Activated CD8-positive, alpha-beta T cell treated with anti-CD3 and anti-CD28 coated beads, Interleukin-2, amount 10 ng/mL, durations not matched to agents 7 days and 5 days (primary cell): ENCODE measurements at regions of chr14 and their contacts with region 1.

Region 1: DNA sequence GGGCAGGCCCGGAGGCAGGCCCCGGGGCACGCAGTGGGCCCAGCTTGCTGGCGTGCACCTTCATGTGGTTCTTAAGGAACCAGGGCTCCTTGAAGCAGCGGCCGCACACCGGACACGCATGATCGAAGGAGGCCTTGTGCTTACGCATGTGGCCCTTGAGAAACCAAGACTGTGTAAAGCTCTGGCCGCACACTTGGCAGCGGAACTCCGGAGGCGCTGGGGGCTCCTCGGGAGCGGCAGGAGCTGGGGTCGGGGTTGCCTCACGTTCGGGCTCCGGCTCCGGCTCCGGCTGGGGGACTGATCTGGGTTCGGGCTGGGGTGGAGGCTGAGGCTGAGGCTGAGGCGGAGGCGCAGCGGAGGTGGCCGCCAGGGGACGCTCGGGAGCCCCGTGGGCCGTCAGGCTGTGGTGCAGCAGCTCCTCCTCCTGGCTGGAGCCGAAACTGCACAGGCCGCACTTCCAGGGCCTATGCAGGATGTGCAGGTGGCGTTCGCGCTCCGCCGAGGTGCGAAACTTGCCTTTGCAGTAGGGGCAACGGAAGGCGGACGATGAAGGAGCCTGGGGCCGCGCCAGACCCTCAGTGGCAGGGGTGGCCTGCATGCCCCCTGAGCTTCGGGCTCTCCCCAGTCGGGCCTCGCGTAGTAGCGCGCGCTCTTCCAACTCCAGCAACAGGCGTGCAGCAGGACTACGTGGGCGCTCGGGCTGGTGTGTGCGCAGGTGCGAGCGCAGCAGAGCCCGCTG is 6.0 kb downstream of the ZNF219 start:
- DNase-seq: peak; percentile 92
- ATAC-seq: peak; percentile 70
- H3K4me3 Mint-ChIP-seq: no peak overlapping the region
- H3K27ac Mint-ChIP-seq: no peak overlapping the region
- H3K4me1 Mint-ChIP-seq: peaks cover 25% of the 10 kb centered on the region
- H3K27me3 Mint-ChIP-seq: peaks cover 27% of the 10 kb centered on the region

Region 2: DNA sequence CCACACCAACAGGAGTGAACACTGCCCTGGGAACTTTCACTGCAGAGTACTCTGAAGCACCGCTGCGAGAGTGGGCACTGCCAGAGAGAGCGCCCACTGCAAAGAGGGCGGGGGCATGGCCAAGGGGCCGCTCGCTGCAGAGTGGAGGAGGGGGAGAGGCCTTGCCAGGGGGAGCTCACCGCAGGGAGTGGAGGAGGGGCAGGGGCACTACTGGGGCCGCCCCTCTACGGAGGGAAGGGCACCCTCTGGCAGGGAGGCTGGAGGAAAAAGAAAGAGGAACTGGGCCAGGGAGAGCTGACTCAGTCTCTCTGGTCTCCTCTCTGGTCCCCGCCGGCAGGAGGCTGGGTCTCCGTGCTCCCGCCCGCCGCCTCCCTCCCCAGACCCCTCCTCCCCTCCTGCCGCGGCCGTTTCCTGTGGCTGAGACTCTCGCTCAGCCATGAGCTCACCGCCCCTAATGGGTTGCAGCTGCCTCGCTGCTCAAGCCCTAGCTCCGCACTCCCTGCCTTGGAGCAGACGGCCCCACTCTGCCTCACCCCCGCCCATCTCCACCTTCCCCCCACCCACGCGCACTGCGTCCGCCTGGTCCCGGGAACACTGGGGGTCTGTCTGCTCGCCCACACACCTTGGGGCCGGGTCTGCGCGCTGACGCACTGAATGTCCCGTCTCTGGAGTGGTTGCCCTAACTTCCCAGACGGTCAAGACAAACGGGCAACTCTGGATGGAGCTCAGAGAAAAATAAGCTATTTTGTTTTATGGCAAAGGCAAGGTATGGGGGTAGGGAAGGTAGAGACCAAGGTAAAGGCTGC is 21.0 kb before region 1 on chr14:
- CTCF ChIA-PET with region 1: interaction called, 87 read pairs
- POLR2A ChIA-PET with region 1: interaction called, 3 read pairs
- DNase-seq: peak; percentile 65
- ATAC-seq: peak; percentile 63
- H3K4me3 Mint-ChIP-seq: peak overlapping the region; percentile 68
- H3K27ac Mint-ChIP-seq: no peak overlapping the region
- H3K4me1 Mint-ChIP-seq: peaks cover 37% of the 10 kb centered on the region
- H3K27me3 Mint-ChIP-seq: peaks cover 63% of the 10 kb centered on the region

Region 3: DNA sequence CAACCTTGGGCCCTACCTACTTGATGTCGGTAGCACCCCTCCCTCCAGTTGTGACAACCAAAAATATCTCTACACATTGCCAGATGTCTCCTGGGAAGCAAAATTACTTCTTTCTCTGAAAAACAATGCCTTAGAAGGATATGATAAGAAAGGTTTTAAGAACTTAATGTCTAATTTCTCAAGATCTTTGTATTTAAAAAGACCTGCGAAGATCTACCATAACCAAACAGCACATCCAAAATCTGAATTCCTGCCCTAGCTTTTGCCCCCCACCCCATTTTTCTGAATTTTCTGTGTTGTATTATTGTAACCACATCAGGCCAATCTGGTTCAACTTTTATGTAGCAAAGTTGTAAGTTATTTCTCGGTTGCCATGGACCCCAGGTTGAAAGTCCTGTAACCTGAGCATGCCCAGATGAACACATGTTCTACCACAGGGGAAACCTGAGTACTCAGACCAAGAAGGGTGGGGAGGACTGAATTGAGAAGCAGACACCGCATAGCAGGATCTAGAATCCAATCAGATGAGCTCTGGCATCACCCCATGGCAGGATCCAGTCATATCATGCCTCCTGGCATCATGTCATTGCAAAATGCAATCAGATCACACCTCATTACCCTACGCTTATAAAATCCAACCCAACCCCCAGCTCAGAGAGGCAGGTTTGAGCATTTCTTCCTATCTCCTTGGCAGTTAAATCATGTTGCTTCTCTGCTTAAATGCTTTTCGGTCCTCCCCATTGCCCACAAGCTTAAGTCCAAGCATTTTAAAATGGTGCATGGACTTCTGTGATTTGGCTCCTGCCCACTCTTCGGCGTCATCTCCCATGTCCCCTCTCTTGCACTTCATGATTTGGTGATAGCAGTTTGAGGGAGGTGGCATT is 17.2 kb after region 1 on chr14:
- CTCF ChIA-PET with region 1: interaction called, 225 read pairs
- POLR2A ChIA-PET with region 1: interaction called, 11 read pairs
- DNase-seq: no peak
- ATAC-seq: no peak
- H3K4me3 Mint-ChIP-seq: no peak overlapping the region
- H3K27ac Mint-ChIP-seq: no peak overlapping the region
- H3K4me1 Mint-ChIP-seq: peaks cover 13% of the 10 kb centered on the region
- H3K27me3 Mint-ChIP-seq: peaks cover 3% of the 10 kb centered on the region